Aorta (tissue), 5 donors: ENCODE measurements at regions of chr6 and their contacts with region 1.

Region 1: GRCh38 chr6:116279260-116280063 is at the start of gene TSPYL1:
- DNase-seq: peak; percentile 98
- ATAC-seq: peak; percentile 99
- H3K4me3 ChIP-seq: peak within 1 kb of the TSS; percentile 81 to 85
- H3K27ac ChIP-seq: peak within 1 kb of the TSS; percentile 84 to 91
- H3K4me1 ChIP-seq: peaks cover 0 to 7% of the 10 kb centered on the region in 2 donors
- H3K27me3 ChIP-seq: no peaks in the 10 kb centered on the region
- total RNA-seq, gene TSPYL1: 77.2 to 78.0 TPM

Region 2: GRCh38 chr6:116253505-116254296 is 25.8 kb before region 1 on chr6 and contains the start of gene TSPYL4:
- intact Hi-C with region 1: loop called in 1 of 2 experiments (anchors 2 kb)
- DNase-seq: peak; percentile 96 to 97
- ATAC-seq: peak; percentile 98
- H3K4me3 ChIP-seq: peak within 1 kb of the TSS; percentile 72 to 84
- H3K27ac ChIP-seq: peak within 1 kb of the TSS; percentile 92 to 96
- H3K4me1 ChIP-seq: peaks cover 5 to 10% of the 10 kb centered on the region in 2 donors
- H3K27me3 ChIP-seq: no peaks in the 10 kb centered on the region
- total RNA-seq, gene TSPYL4: 15.7 to 18.4 TPM

Region 3: DNA sequence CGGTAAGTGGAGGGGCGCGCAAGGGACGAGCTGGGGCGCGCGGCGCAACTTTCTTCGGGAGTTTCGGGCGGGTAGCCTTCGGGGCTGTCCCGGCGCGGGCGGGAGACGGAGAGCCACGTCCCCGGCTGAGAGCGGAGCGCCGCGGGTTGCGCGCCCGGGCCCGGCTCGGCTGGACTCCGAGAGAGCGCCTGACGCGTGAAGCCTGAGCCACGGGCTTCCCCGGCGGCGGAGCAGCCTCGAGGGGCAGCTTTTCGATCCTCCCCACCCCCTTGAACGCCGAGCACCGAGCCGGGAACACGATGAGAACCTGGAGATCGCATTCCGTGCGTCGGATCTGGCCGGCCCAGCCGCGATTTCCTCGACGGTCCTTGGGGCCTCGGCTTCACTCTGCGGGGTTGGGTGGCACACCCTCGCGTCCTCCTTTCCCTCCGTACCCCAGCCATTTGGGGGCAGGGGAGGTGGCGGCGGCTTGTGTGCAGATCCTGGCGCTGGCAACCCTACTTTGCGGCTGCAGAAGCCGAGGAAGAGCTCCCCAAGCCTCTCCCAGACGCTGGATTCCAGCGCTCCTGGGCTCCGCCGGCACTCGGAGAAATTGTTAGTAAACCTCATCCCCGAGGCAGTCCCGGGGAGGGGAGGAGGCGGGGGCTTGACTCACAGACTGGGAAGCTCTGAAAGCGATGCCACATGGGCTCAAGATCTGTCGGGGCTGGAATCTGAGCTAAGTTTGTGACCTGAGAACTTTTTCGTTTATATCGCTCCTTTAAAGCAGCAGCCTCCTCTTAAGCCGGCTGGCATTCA is 91.9 kb after region 1 on chr6:
- intact Hi-C with region 1: loop called in 1 of 2 experiments (anchors 5 kb)
- DNase-seq: peak; percentile 92 to 94
- ATAC-seq: peak; percentile 86
- H3K4me3 ChIP-seq: peak overlapping the region; percentile 56 to 86
- H3K27ac ChIP-seq: peak overlapping the region; percentile 72 to 97
- H3K4me1 ChIP-seq: peaks cover 0 to 2% of the 10 kb centered on the region in 2 donors
- H3K27me3 ChIP-seq: no peaks in the 10 kb centered on the region

Region 4: DNA sequence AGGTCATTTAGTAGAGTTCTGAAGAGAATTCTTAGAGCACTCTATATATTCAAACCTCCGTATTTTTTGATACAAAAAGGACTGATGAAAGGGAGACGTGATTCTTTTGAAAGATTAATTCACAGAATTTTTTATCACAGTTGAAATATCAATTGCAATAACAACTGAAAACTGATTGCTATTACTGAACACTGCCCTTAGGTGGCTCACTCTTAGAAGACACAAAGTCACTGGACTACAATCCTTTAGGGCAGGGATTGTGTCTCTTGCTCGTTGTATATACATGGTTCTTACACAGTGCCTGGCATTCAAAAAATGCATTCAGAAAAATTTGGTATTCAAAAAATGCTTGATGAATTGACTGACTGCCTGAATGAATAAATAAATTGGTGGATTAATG is 164.6 kb after region 1 on chr6:
- intact Hi-C with region 1: loop called in 1 of 2 experiments (anchors 10 kb)
- DNase-seq: no peak
- ATAC-seq: no peak
- H3K4me3 ChIP-seq: no peak overlapping the region
- H3K27ac ChIP-seq: no peak overlapping the region
- H3K4me1 ChIP-seq: peaks cover 2 to 4% of the 10 kb centered on the region in 2 donors
- H3K27me3 ChIP-seq: no peaks in the 10 kb centered on the region

Region 5: GRCh38 chr6:116511404-116512110 is 232.1 kb after region 1 on chr6 and contains the start of gene CALHM5:
- intact Hi-C with region 1: loop called in 1 of 2 experiments (anchors 5 kb)
- DNase-seq: peak; percentile 65 to 79
- ATAC-seq: peak; percentile 94
- H3K4me3 ChIP-seq: peak within 1 kb of the TSS; percentile 87 to 100
- H3K27ac ChIP-seq: peak within 1 kb of the TSS; percentile 36 to 99
- H3K4me1 ChIP-seq: peaks cover 2 to 3% of the 10 kb centered on the region in 2 donors
- H3K27me3 ChIP-seq: peaks cover 0 to 1% of the 10 kb centered on the region in 2 donors
- total RNA-seq, gene CALHM5: 11.5 to 15.4 TPM

Region 6: DNA sequence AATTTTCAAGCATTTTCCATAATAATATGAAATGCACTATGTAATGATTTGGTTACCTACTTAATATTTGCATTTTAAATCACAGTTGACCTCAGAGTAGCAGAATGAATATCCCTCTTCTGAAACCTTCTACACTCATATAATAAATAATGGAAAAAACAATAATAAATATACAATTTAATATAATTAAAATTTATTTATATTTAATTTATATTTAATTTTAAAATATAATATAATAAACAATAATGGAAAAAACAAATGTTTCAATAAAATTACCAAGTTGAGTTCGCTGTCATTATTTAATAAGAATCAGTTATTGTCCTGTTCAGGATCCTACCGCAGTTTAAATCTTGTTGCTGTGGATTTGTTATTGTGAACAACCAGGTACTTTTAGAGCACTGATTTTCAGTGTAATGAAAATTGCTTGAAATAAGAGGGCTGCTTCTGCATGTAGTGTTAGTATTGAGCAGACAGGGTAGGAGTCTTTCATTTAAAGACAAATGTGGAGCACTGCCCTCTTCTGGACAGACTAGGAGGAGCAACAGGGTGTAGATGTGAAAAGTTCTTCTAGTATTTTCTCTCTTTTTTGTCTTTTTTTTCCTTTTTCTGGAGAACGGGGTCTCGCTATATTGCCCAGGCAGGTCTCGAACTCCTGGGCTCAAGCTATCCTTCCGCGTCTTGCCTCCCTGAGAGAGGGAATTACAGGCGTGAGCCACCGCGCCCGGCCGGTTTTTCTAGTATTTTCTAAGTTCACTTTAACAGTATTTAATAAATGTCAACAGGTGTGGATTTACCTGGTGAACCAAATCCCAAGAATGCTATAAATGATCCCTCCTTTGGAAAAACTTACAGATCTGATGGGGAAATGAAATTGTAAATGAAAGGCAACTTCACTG is 252.5 kb after region 1 on chr6:
- intact Hi-C with region 1: loop called in 1 of 2 experiments (anchors 5 kb)
- DNase-seq: peak; percentile 55 to 75
- ATAC-seq: peak; percentile 90
- H3K4me3 ChIP-seq: no peak overlapping the region
- H3K27ac ChIP-seq: no peak overlapping the region
- H3K4me1 ChIP-seq: no peaks in the 10 kb centered on the region
- H3K27me3 ChIP-seq: no peaks in the 10 kb centered on the region

Region 7: GRCh38 chr6:116561377-116562018 is 282.0 kb after region 1 on chr6:
- intact Hi-C with region 1: loop called (anchors 10 kb)
- DNase-seq: peak; percentile 74 to 86
- ATAC-seq: peak; percentile 80
- H3K4me3 ChIP-seq: peak overlapping the region; percentile 35 to 38
- H3K27ac ChIP-seq: no peak overlapping the region
- H3K4me1 ChIP-seq: no peaks in the 10 kb centered on the region
- H3K27me3 ChIP-seq: no peaks in the 10 kb centered on the region